Activated naive CD4-positive, alpha-beta T cell treated with anti-CD3 and anti-CD28 coated beads, Interleukin-2, amount 10 ng/mL, durations not matched to agents 7 days and 5 days (primary cell): ENCODE measurements at regions of chr12 and their contacts with region 1.

Region 1: GRCh38 chr12:112992541-112993398 is 14.5 kb downstream of the OAS2 start:
- DNase-seq: peak; percentile 81
- H3K4me3 Mint-ChIP-seq: no peak overlapping the region
- H3K27ac Mint-ChIP-seq: peak overlapping the region; percentile 46
- H3K4me1 Mint-ChIP-seq: peaks cover 40% of the 10 kb centered on the region
- H3K27me3 Mint-ChIP-seq: no peaks in the 10 kb centered on the region

Region 2: GRCh38 chr12:112686373-112686772 is 306.4 kb before region 1 on chr12:
- CTCF ChIA-PET with region 1: no interaction called
- DNase-seq: no peak
- H3K4me3 Mint-ChIP-seq: no peak overlapping the region
- H3K27ac Mint-ChIP-seq: no peak overlapping the region
- H3K4me1 Mint-ChIP-seq: no peaks in the 10 kb centered on the region
- H3K27me3 Mint-ChIP-seq: peaks cover 18% of the 10 kb centered on the region

Region 3: GRCh38 chr12:112906712-112907414 is 85.9 kb before region 1 on chr12 and contains the start of gene OAS1:
- CTCF ChIA-PET with region 1: interaction called, 33 read pairs
- DNase-seq: peak; percentile 58
- H3K4me3 Mint-ChIP-seq: peak within 1 kb of the TSS; percentile 94
- H3K27ac Mint-ChIP-seq: peak within 1 kb of the TSS; percentile 92
- H3K4me1 Mint-ChIP-seq: peaks cover 84% of the 10 kb centered on the region
- H3K27me3 Mint-ChIP-seq: no peaks in the 10 kb centered on the region

Region 4: GRCh38 chr12:112963227-112963867 is 29.4 kb before region 1 on chr12:
- CTCF ChIA-PET with region 1: interaction called, 11 read pairs
- DNase-seq: no peak
- H3K4me3 Mint-ChIP-seq: no peak overlapping the region
- H3K27ac Mint-ChIP-seq: no peak overlapping the region
- H3K4me1 Mint-ChIP-seq: peaks cover 7% of the 10 kb centered on the region
- H3K27me3 Mint-ChIP-seq: no peaks in the 10 kb centered on the region

Region 5: DNA sequence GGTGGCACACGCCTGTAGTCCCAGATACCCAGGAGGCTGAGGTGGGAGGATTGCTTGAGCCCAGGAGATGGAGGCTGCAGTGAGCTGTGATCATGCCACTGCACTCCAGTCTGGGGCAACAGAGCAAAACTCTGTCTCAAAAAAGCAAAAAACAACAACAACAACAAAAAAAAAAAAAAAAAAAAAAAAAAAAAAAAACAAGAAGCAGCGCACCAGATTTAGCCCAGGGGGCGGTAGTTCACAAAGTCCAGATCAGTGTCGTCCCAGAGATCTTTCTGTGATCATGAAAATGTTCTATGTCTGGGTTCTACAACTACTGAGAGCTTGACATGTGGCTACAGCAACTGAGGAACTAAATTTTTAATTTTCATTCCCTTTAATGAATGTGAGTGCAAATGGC is 13.0 kb after region 1 on chr12:
- CTCF ChIA-PET with region 1: interaction called, 42 read pairs
- DNase-seq: no peak
- H3K4me3 Mint-ChIP-seq: no peak overlapping the region
- H3K27ac Mint-ChIP-seq: no peak overlapping the region
- H3K4me1 Mint-ChIP-seq: no peaks in the 10 kb centered on the region
- H3K27me3 Mint-ChIP-seq: no peaks in the 10 kb centered on the region

Region 6: DNA sequence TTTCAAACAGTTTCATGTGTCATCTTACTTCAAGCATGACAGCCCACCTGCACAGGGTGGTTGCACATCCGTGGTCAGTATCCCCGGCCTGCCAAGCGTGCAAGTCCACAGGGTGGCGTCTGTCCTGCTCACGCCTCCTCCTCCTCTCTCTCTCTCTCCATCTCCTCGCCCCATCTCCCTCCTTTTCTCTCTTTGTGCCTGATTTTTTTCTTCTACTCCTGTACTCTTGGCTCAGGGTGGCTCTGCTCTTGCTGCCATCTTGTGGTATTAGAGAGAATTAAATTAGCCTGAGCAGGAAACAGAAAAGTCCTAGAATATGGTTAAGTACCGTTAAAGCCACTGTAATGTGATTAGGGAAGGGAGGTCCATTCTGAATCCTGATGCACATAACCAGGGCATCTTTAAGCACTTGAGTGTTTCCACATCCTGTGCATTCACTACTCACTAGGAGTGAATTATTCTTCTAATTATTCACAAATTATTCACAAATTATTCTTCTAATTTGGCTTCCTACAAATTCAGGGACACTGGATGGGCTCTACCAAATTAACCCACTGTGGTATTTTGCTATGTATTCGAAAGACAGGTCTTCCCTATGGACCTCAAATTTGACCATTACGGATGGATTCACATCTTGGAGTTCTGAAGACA is 38.2 kb after region 1 on chr12:
- CTCF ChIA-PET with region 1: interaction called, 14 read pairs
- DNase-seq: no peak
- H3K4me3 Mint-ChIP-seq: no peak overlapping the region
- H3K27ac Mint-ChIP-seq: no peak overlapping the region
- H3K4me1 Mint-ChIP-seq: no peaks in the 10 kb centered on the region
- H3K27me3 Mint-ChIP-seq: peaks cover 21% of the 10 kb centered on the region

Region 7: DNA sequence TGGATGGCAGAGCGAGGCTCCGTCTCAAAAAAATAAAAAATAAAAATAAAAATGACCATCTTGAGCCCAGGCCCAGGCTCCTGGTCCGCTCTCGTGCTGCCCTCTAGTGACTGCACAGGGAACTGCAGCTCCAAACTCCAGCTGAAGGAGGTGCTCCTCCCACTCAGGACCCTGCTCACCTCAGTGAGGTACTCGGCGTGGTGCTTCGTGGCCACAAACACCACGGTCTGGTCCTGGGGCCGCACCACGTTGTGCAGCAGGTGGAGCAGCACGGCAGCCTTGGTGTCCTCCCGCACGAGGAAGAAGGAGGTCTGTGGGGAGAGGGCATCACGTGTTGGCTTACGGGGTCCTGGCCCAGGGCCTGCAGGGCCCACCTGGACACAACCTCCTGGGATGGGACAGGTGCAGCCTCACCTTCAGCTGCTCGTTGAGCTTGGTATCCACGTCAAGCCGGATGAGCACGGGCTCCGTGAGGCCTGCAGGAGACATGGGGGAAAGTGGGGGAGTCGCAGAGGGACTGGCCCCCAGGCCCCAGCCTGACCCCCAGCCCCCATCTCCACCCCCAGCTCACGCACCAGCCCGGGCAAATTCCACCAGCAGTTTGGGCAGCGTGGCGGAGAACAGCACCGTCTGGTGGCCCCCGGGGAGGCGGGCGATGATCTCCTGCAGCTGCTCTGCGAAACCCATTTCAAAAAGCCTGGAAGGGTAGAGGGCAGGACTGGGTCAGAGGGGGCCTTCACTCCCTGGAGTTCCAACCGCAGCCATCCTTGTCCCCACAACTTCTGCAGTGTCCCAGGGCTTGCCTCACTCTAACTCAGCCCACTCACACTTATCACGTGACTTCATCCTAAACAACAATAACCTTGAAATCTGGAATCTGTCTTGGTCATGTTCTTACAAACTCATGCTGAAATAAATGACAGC is 182.0 kb after region 1 on chr12:
- CTCF ChIA-PET with region 1: interaction called, 41 read pairs
- DNase-seq: peak; percentile 82
- H3K4me3 Mint-ChIP-seq: no peak overlapping the region
- H3K27ac Mint-ChIP-seq: no peak overlapping the region
- H3K4me1 Mint-ChIP-seq: no peaks in the 10 kb centered on the region
- H3K27me3 Mint-ChIP-seq: no peaks in the 10 kb centered on the region